Activated naive CD4-positive, alpha-beta T cell treated with anti-CD3 and anti-CD28 coated beads for 36 hours (primary cell): ENCODE measurements at regions of chr20 and their contacts with region 1.

Region 1: GRCh38 chr20:44866703-44867335 is 18.7 kb upstream of the YWHAB start:
- DNase-seq: no peak
- H3K4me3 Mint-ChIP-seq: peak overlapping the region; percentile 52
- H3K27ac Mint-ChIP-seq: no peak overlapping the region
- H3K4me1 Mint-ChIP-seq: peaks cover 9% of the 10 kb centered on the region
- H3K27me3 Mint-ChIP-seq: peaks cover 3% of the 10 kb centered on the region

Region 2: DNA sequence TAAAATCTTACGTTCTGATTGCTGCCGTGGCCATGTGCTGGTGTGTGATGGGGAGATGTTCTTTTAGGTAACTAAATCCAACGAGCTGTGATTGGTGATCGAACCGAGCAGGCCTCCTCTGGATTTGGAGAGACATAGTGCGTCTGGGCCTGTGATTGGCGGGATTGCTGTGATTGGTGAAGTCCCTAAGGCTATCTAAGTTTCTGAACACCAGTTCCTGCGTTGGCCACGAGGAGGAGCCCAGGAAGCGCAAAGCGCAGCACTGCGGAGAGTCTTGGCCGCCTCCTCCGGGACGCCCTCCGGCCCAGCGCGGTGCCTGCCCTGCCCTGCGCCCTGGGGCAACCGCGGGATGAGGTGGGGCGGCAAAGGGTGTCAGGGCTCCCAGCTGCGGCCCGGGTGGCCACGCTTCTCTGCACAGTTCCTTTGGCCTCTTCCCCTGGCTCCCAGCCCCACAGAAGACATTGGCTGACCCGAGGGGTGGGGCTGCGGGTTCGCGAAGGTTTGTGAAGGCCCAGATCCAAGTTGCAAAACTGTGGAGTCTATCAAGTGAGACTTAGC is 478.3 kb before region 1 on chr20:
- CTCF ChIA-PET with region 1: no interaction called
- intact Hi-C with region 1: loop called (anchors 1 kb)
- DNase-seq: peak; percentile 90
- H3K4me3 Mint-ChIP-seq: peak overlapping the region; percentile 22
- H3K27ac Mint-ChIP-seq: no peak overlapping the region
- H3K4me1 Mint-ChIP-seq: peaks cover 11% of the 10 kb centered on the region
- H3K27me3 Mint-ChIP-seq: peaks cover 3% of the 10 kb centered on the region

Region 3: GRCh38 chr20:44582311-44583025 is 284.4 kb before region 1 on chr20 and contains the start of gene PKIG:
- CTCF ChIA-PET with region 1: no interaction called
- intact Hi-C with region 1: no loop called
- DNase-seq: no peak
- H3K4me3 Mint-ChIP-seq: no peak within 1 kb of the TSS
- H3K27ac Mint-ChIP-seq: no peak within 1 kb of the TSS
- H3K4me1 Mint-ChIP-seq: no peaks in the 10 kb centered on the region
- H3K27me3 Mint-ChIP-seq: no peaks in the 10 kb centered on the region
- total RNA-seq, gene PKIG: 4.6 to 4.7 TPM

Region 4: GRCh38 chr20:44800398-44801046 is 66.3 kb before region 1 on chr20:
- CTCF ChIA-PET with region 1: interaction called, 6 read pairs
- intact Hi-C with region 1: loop called (anchors 1 kb)
- DNase-seq: peak; percentile 16
- H3K4me3 Mint-ChIP-seq: no peak overlapping the region
- H3K27ac Mint-ChIP-seq: no peak overlapping the region
- H3K4me1 Mint-ChIP-seq: no peaks in the 10 kb centered on the region
- H3K27me3 Mint-ChIP-seq: peaks cover 3% of the 10 kb centered on the region